Thyroid gland (tissue), 4 donors: ENCODE measurements at regions of chr5 and their contacts with region 1.

Region 1: GRCh38 chr5:150783422-150783928 is 4.9 kb downstream of the SMIM3 start:
- DNase-seq: peak; percentile 68 to 75
- H3K4me3 ChIP-seq: no peak overlapping the region
- H3K27ac ChIP-seq: peak overlapping the region; percentile 73 to 88 (median 82)
- H3K4me1 ChIP-seq: peaks cover 26 to 32% of the 10 kb centered on the region in 2 donors
- H3K27me3 ChIP-seq: no peaks in the 10 kb centered on the region
- CTCF ChIP-seq: no peak
- POLR2A ChIP-seq: peak in 1 of 2 donors; percentile 16

Region 2: DNA sequence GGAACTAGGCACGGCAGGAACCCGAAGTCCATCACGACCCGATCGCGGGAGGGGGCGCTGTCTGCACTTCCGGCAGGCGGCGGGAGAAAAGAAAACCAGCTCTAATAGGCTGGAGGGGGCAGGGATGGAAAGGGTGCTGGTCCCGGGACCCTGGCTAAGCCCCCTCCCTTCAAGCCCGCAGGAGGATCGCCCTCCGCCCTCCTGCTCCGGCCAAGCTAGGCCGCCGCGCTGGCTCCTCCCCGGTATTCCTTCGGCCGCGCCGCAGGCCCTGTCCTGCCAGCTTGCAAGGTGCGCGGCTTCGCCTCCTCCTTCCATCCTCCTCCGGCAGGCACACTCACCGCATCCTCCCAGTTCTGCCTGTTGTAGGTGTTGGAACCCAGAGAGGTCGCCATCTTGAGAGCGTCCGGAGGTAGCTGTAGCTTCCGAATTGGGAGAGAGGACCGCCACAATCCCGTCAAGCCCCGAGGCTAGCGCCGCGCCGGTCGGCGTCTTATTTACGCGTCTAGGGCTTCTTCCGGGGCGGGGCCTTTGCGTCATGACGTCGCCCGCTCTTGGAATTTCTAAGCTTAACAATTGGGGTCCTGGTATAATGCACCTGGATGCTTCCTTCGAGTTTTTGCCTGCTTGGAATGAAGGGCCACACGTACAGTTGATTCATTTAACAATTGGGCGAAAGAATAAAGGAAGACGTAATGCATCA is 82.7 kb before region 1 on chr5 and contains the start of gene RBM22:
- intact Hi-C with region 1: loop called (anchors 5 kb)
- DNase-seq: peak; percentile 93 to 95
- H3K4me3 ChIP-seq: peak within 1 kb of the TSS; percentile 85 to 98 (median 93)
- H3K27ac ChIP-seq: peak within 1 kb of the TSS; percentile 85 to 97 (median 93)
- H3K4me1 ChIP-seq: peaks cover 14 to 18% of the 10 kb centered on the region in 2 donors
- H3K27me3 ChIP-seq: no peaks in the 10 kb centered on the region
- CTCF ChIP-seq: peak; percentile 10 to 60 (median 40)
- POLR2A ChIP-seq: peak in 1 of 2 donors; percentile 75
- total RNA-seq, gene RBM22: 39.1 to 47.2 (median 42.9) TPM

Region 3: GRCh38 chr5:150895431-150896428 is 112.3 kb after region 1 on chr5:
- intact Hi-C with region 1: no loop called
- DNase-seq: no peak
- H3K4me3 ChIP-seq: no peak overlapping the region
- H3K27ac ChIP-seq: no peak overlapping the region
- H3K4me1 ChIP-seq: no peaks in the 10 kb centered on the region
- H3K27me3 ChIP-seq: no peaks in the 10 kb centered on the region
- CTCF ChIP-seq: no peak
- POLR2A ChIP-seq: no peak